Right ventricle myocardium superior (tissue), 1 donor: ENCODE measurements at regions of chr6 and their contacts with region 1.

Region 1: DNA sequence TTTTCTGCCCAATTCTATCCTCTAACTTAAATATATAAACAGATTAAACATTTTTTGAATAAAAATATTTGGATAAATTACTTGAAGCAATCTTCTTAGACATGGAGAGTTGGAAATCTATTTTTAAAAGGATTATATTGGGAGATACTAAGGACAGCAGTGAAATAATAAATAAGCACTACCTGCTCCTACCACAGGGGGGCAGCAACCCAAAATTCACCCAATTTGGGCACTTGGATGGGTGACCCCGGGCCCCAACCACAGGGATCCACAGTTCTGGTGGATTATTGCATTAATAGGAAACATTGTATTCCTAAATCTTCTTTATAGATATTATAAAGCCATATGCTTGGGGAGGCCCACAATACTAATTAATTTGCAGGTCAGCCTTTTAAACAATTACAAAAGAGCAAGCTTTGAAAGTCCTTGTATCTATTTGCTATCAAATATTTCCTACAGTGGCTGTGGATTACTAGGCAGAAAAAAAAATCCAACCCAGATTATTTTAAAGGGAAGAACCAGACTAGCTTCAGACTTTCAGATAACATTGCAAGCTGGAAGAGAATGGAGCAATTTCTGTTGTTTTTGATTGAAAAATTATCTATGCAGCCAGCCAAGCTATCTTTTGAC is 66.4 kb upstream of the PDE10A start:
- DNase-seq: peak; percentile 52
- ATAC-seq: peak; percentile 76

Region 2: GRCh38 chr6:165686596-165687365 is 42.6 kb before region 1 on chr6:
- intact Hi-C with region 1: no loop called
- DNase-seq: no peak
- ATAC-seq: no peak

Region 3: DNA sequence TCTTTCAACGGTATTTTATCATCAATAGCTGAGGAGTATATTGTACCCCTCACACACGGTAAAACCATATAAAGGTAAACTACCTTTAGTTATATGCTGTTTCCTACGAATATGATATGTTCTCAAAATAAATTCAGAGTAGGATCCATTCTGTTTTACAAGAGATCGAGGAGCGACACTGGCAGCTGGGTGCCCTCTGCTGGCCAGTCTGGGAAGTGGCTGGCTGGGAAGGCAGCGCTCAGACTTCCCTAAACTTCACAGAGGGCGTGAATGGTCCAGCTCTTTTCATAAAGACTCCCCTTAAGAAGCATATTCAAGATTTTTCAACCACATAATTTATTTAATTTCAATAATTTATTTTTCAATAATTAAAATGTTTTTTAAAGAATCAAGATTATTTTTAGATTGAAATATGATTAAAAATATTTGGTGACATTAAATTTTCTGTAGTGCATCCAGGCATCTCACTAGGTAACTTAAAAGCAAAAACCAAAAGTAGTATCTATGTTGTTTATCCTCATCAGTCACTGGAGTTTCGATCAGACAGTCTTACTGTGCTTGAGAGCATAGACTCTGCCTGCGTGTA is 121.1 kb after region 1 on chr6:
- intact Hi-C with region 1: loop called (anchors 2 kb)
- DNase-seq: peak; percentile 86
- ATAC-seq: peak; percentile 89